ENCODE measurements at regions of chr1 and their contacts with region 1.

Region 1: DNA sequence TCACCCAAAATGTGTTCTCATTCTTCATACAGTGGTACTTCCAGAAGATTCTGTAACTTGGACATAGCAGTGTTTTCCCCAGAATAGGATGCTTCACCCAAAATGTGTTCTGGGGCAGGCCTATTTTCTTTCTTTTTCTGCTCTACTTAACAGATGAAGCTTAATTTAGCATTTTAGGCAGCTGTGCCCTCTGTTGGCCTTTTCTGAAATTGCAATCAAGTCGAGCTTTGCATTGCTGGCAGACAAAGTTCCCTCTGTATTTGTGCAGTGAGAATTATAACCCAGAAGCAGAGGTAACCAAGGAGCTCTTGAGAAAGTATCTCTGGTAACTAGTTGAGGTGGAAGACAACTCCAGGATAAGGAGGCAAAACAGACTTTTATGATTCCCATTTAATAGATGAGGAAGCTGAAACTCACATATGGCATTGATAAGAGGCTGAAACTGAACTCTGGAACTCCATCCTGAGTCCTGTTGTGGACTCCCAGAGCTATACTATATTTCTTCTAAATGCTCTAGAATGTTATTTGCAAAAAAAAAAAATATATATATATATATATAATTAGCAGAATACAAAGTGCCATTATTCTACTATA is 50.3 kb upstream of the L1TD1 start:
- DNase-seq: peak; percentile 55
- H3K4me3 Mint-ChIP-seq: no peak overlapping the region
- H3K27ac Mint-ChIP-seq: no peak overlapping the region
- H3K4me1 Mint-ChIP-seq: no peaks in the 10 kb centered on the region
- H3K27me3 Mint-ChIP-seq: no peaks in the 10 kb centered on the region

Region 2: DNA sequence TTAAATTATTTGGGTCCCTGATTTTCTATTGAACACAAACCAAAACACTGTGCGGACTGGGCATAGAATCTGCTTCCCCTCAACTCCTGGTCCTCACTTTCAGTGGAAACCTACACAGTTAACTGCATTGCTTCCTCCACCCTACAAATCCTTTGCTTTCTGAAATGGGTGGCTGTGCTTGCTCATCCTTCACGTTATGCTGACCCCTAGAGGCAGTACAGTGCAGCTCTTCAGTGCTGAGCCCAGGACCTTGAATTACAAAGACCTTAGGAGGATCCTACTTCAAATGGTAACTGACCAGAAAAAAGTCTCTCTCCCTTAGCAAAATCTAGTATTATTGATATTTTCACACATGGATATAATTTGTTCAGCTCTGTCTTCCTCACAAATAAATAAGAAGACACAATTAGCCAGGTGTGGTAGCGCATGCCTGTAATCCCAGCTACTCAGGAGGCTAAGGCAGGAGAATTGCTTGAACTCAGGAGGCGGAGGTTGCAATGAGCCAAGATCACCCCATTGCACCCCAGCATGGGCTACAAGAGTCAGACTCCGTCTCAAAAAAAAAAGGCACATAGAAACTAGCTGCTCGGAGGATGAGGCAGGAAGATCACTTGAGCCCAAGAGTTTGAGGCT is 13.1 kb before region 1 on chr1:
- CTCF ChIA-PET with region 1: interaction called, 20 read pairs
- POLR2A ChIA-PET with region 1: no interaction called
- DNase-seq: peak; percentile 58
- H3K4me3 Mint-ChIP-seq: no peak overlapping the region
- H3K27ac Mint-ChIP-seq: no peak overlapping the region
- H3K4me1 Mint-ChIP-seq: no peaks in the 10 kb centered on the region
- H3K27me3 Mint-ChIP-seq: no peaks in the 10 kb centered on the region